Activated CD4-positive, alpha-beta T cell treated with anti-CD3 and anti-CD28 coated beads for 36 hours (primary cell): ENCODE measurements at regions of chr12 and their contacts with region 1.

Region 1: DNA sequence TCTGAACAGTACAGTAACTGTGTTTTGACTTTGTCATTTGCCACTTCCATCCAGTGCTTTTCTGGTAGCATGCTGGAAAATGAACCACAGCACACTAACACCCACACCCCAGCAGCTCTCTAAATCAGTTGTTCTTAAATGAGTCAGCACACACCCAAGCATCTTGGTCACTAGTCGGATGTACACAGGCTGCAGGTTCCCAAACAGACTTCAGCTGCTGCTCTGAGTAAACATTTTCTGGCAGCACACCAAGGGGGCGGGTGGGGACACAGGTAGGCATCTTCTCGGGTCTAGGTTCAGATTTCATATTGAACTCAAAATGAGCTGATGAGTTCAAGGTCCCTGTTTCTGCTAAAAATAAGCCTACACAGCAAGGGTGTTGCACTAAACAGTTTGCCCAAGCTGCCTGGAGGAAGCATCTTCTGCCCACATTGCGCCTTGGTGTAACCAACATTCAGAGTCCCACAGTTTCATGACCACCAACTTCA is 39.8 kb downstream of the IFNG start:
- DNase-seq: peak; percentile 84
- ATAC-seq: peak; percentile 82
- H3K4me3 Mint-ChIP-seq: no peak overlapping the region
- H3K27ac Mint-ChIP-seq: peak overlapping the region; percentile 48
- H3K4me1 Mint-ChIP-seq: peaks cover 20% of the 10 kb centered on the region
- H3K27me3 Mint-ChIP-seq: peaks cover 3% of the 10 kb centered on the region

Region 2: DNA sequence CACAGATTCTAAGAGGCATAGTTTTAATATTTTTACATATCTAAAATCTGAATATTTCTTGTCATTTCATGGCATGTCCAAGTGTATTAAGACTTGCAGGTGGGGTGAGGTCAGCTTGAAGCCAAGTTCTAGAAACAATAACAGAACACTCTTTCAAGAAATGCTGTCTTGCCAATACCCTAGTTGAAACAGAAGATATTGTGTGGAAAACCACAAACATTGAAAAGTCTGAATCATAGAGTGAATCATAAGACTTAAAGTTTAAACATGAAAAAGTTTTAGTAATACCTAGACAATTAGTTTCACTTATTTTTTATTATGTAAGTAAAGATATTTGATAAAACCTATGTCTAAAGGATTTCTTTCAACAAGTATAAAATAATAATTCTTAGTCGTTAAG is 1042.2 kb before region 1 on chr12:
- CTCF ChIA-PET with region 1: no interaction called
- POLR2A ChIA-PET with region 1: no interaction called
- intact Hi-C with region 1: loop called in 1 of 2 experiments (anchors 5 kb)
- DNase-seq: peak; percentile 5
- ATAC-seq: peak; percentile 58
- H3K4me3 Mint-ChIP-seq: no peak overlapping the region
- H3K27ac Mint-ChIP-seq: no peak overlapping the region
- H3K4me1 Mint-ChIP-seq: peaks cover 9% of the 10 kb centered on the region
- H3K27me3 Mint-ChIP-seq: peaks cover 31% of the 10 kb centered on the region

Region 3: DNA sequence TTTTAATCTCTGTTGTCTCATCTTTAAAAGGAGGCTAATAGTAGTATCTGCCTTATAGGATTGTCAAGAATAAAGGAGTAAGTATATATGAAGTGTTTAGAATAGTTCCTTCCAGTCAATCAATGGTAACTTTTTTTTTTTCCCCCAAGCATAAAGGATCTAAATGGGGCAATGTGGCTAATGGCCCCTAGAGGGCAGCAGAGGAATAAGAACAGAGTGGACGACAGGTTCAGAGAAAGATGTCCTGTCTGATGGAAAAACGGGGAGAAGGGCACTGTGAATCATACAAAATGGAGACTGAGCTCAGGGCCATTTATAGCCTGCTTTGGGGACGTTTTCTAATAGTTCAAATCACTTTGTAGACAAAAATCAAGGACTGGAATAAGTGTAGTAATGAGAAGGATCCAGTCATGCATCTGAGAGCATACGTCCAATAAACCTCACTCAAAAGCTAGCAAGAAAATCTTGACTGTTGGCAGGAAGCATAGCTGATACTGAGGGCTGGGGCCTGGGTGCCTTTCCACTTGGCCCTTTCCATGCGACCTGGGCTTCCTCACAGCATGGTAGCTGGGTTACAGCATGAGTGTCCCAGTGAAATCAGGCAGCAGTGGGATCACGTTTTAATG is 79.2 kb before region 1 on chr12:
- CTCF ChIA-PET with region 1: interaction called, 8 read pairs
- POLR2A ChIA-PET with region 1: no interaction called
- intact Hi-C with region 1: loop called in 1 of 2 experiments (anchors 2 kb)
- DNase-seq: peak; percentile 76
- ATAC-seq: peak; percentile 69
- H3K4me3 Mint-ChIP-seq: no peak overlapping the region
- H3K27ac Mint-ChIP-seq: no peak overlapping the region
- H3K4me1 Mint-ChIP-seq: peaks cover 34% of the 10 kb centered on the region
- H3K27me3 Mint-ChIP-seq: no peaks in the 10 kb centered on the region

Region 4: DNA sequence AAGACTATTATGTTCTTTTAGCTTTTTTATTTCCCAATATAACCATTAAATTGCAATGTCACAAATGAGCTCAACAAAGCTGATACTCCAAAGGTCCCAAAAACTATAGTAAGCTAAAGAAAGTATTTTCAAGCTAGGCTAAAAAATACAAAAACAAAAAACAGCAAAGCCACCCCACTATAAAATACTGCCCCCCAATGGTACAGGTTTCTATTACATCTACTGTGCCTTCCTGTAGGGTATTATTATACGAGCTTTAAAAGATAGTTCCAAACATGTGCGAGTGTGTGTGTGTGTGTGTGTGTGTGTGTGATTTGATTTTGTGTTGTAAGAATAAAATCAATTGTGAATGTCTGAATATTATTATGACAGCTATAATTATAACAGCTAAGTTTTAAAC is 38.7 kb after region 1 on chr12:
- CTCF ChIA-PET with region 1: interaction called, 51 read pairs
- POLR2A ChIA-PET with region 1: interaction called, 6 read pairs
- intact Hi-C with region 1: loop called in 1 of 2 experiments (anchors 1 kb)
- DNase-seq: no peak
- ATAC-seq: no peak
- H3K4me3 Mint-ChIP-seq: peak overlapping the region; percentile 67
- H3K27ac Mint-ChIP-seq: no peak overlapping the region
- H3K4me1 Mint-ChIP-seq: peaks cover 20% of the 10 kb centered on the region
- H3K27me3 Mint-ChIP-seq: peaks cover under 1% of the 10 kb centered on the region

Region 5: DNA sequence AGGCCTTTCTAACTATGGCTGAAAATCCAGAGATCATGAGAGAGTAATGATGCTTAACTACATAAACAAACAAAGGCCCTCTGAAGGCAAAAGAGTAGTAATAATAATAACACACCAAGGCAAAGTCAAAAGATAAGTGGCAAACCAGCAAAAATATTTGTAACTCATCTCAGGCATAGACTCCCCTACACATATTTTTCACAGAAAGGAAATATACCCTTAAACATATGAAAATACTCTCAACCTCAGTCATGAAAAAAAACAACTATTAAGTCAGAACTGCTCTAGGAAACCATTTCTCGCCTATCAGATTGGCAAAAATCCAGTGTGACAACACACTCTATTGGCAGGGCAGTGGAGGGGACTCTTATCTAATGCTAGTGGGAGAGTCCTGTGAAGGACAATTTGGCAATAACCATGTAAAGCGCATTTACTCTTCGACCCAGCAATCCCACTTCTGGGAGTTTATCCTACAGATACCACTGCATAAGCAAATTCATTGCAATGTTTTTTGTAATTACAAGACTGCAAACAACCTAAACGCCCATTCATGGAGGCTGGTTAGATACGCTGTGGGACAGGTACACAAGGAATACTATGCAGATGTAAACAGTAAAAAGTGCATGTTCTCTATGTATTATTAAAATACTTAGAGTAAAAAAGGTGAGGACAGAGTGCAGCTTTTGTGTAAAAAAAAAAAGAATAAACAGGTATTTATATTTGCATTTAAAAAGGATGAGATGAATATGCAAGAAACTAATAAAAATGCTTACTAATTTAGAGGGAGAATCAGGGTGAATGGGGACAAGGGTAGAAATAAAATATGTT is 159.7 kb after region 1 on chr12:
- CTCF ChIA-PET with region 1: no interaction called
- POLR2A ChIA-PET with region 1: no interaction called
- intact Hi-C with region 1: loop called in 1 of 2 experiments (anchors 5 kb)
- DNase-seq: no peak
- ATAC-seq: no peak
- H3K4me3 Mint-ChIP-seq: no peak overlapping the region
- H3K27ac Mint-ChIP-seq: no peak overlapping the region
- H3K4me1 Mint-ChIP-seq: peaks cover 33% of the 10 kb centered on the region
- H3K27me3 Mint-ChIP-seq: peaks cover 22% of the 10 kb centered on the region